Activated T-helper 2 cell treated with anti-CD3 and anti-CD28 coated beads, Interferon-gamma antibody, Interleukin-2, Interleukin-4, amounts not matched to agents 10 μg/mL and 5 μg/mL and 100 μg/mL, durations not matched to agents 14 hours and 24 hours and 36 hours (primary cell): ENCODE measurements at regions of chr7 and their contacts with region 1.

Region 1: DNA sequence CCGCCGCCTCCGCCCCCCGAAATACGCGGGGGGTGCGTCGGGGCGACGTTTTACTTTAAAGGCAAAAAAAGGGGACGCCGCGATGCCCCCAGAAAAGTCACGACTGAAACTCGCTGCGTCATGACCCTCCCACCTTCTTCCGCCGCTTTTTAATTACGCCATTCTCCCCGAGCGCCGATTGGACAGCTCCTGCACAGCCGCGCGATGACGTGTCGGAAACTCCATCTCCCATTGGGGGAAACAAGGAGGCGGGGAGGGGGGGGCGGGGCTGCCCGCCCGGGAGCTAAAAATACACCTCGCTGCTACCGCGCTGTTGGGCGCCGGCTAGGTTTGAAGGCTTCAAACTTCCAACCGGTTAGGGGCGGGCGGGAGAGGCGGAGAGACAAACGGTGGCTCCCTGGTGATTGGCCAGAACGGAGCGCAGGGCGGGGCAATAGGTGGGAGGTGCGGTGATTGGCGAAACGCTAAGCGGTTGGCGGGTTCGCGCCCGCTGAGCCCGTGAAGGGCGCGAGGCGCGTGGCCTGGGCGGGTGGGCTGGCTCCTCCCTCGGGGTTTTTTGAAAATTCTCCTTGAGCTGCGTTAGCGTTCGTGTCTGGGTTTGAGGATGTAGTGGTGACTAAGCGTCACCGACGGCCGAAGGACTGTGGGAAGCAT is at the start of gene RHEB:
- DNase-seq: peak; percentile 97
- H3K4me3 Mint-ChIP-seq: peak within 1 kb of the TSS; percentile 96
- H3K27ac Mint-ChIP-seq: peak within 1 kb of the TSS; percentile 96
- H3K4me1 Mint-ChIP-seq: peaks cover 31% of the 10 kb centered on the region
- H3K27me3 Mint-ChIP-seq: peaks cover 2% of the 10 kb centered on the region
- total RNA-seq, gene RHEB: 52.8 and 60.5 TPM in 2 replicates

Region 2: DNA sequence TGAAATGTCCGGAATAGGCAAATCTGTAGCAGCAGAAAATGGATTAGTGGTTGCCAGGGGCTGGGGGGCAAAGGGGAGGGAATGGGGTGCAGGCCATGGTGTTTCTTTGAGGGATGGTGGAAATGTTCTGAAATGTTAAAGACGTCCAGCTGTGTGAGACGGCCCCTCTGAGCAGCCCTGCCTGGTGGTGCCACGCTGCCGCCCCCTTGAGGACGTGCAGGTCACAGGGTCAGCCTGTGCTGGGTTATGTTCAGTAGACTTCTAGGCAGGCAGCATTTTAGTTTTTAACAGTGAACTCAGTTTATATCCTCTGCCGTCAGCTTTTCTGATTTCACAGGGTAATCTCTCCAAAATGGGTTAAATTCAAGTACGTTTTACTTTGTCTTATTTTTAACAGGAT is 168.9 kb before region 1 on chr7:
- intact Hi-C with region 1: loop called (anchors 1 kb)
- DNase-seq: no peak
- H3K4me3 Mint-ChIP-seq: peak overlapping the region; percentile 54
- H3K27ac Mint-ChIP-seq: peak overlapping the region; percentile 90
- H3K4me1 Mint-ChIP-seq: peaks cover 35% of the 10 kb centered on the region
- H3K27me3 Mint-ChIP-seq: no peaks in the 10 kb centered on the region

Region 3: GRCh38 chr7:151408839-151409666 is 110.8 kb before region 1 on chr7:
- intact Hi-C with region 1: no loop called
- DNase-seq: peak; percentile 21
- H3K4me3 Mint-ChIP-seq: peak overlapping the region; percentile 39
- H3K27ac Mint-ChIP-seq: no peak overlapping the region
- H3K4me1 Mint-ChIP-seq: peaks cover 13% of the 10 kb centered on the region
- H3K27me3 Mint-ChIP-seq: peaks cover 47% of the 10 kb centered on the region

Region 4: GRCh38 chr7:151631968-151632749 is 112.3 kb after region 1 on chr7:
- intact Hi-C with region 1: loop called (anchors 2 kb)
- DNase-seq: peak; percentile 80
- H3K4me3 Mint-ChIP-seq: peak overlapping the region; percentile 84
- H3K27ac Mint-ChIP-seq: peak overlapping the region; percentile 89
- H3K4me1 Mint-ChIP-seq: peaks cover 16% of the 10 kb centered on the region
- H3K27me3 Mint-ChIP-seq: no peaks in the 10 kb centered on the region

Region 5: DNA sequence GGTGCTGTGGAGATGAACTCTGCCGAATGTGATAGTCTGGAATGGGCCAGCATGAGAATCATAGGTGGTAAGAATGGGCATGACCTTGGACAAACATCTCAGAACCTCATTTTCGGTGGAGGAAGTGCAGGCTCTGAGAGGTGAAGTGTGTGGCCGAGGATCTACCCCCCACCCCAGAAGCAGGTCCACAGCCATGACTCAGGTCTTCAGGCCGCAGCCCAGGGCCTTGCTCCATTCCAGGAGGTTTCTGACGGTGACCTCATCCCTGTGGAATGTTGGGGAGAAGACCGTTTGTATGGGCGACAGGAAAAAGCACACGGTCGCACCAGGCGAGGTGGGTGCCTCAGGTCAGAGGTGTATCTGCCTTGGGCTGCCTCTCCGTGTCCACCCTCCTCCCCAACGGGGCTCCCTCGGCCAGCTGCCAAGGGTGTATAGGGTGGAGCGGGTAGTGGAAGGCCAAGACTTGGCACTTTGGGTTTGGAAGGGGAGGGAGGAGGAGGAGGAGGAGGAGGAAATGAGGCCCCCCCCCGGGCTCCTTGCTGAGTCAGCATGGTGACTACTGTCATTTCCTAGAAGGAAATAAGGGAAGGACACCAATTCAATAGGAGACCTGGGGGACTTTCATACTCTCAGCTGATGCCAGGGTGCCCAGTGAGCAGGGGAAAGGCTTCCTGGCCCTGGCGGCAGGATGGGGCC is 167.8 kb after region 1 on chr7:
- intact Hi-C with region 1: no loop called
- DNase-seq: no peak
- H3K4me3 Mint-ChIP-seq: no peak overlapping the region
- H3K27ac Mint-ChIP-seq: no peak overlapping the region
- H3K4me1 Mint-ChIP-seq: no peaks in the 10 kb centered on the region
- H3K27me3 Mint-ChIP-seq: no peaks in the 10 kb centered on the region

Region 6: DNA sequence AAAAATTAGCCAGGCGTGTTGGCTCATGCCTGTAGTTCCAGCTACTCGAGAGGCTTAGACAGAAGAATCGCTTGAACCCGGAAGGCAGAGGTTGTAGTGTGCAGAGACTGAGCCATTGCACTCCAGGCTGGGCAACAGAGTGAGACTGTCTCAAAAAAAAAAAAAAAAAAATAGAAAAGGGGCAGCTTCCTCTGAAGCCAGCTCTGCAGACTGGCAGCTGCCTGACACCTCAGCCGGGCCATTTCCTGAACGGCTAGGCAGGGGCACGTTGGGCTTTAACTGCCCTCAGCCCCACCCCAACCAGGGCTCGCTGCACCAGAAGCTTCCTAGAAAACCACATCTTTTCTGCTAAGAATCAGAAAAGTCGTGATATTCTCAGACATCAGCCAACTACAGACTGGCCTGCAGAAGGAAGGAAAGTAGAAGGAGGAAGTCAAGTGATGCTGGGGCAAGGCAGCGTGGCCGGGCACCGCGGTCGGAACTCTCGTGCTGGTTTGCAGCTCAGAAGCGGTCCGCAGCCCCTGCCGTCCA is 319.0 kb after region 1 on chr7:
- intact Hi-C with region 1: no loop called
- DNase-seq: peak; percentile 34
- H3K4me3 Mint-ChIP-seq: peak overlapping the region; percentile 14
- H3K27ac Mint-ChIP-seq: peak overlapping the region; percentile 68
- H3K4me1 Mint-ChIP-seq: peaks cover 6% of the 10 kb centered on the region
- H3K27me3 Mint-ChIP-seq: no peaks in the 10 kb centered on the region

Region 7: DNA sequence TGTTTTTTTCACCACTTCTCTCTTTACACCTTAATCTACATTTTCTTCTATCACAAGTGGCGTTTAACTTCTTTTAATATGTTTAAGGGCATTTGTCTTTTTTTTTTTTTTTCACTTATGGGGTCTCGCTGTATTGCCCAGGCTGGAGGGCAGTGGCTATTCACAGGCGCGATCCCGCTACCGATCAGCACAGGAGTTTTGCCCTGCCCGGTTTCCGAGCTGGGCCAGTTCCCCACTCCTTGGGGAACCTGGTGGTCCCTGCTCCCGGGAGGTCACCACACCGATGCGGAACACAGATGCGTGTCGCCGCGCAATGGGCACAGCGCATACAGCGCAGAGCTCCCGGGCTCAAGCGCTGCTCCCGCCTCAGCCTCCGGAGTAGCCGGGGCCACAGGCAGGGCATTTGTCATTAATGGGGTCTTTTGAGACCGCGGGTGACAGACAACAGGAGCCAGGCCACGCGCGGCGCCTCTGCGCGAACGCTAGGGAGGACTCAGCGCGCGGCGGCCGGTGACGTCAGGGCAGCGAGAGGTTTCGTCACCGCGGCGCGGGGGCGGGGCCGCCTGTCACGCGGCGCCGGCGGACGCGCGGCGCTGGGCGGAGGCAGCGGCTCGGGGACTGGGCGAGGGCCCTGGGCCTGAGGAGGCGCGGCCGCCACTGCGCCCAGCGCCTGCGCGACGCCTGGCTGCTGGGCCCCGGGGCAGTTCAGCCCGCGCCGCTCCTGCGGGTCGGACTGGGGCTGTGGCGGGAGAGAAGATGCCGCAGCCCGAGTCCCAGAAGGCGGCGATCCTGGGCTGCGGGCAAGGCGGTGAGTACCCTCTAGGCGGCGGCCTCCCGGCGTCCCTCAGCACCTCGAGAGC is 505.4 kb after region 1 on chr7 and contains the start of gene GALNT11:
- intact Hi-C with region 1: loop called (anchors 10 kb)
- DNase-seq: peak; percentile 85
- H3K4me3 Mint-ChIP-seq: peak within 1 kb of the TSS; percentile 85
- H3K27ac Mint-ChIP-seq: peak within 1 kb of the TSS; percentile 68
- H3K4me1 Mint-ChIP-seq: peaks cover 20% of the 10 kb centered on the region
- H3K27me3 Mint-ChIP-seq: peaks cover 4% of the 10 kb centered on the region
- total RNA-seq, gene GALNT11: 21.3 and 22.8 TPM in 2 replicates